Activated CD8-positive, alpha-beta T cell treated with anti-CD3 and anti-CD28 coated beads for 36 hours (primary cell): ENCODE measurements at regions of chr7 and their contacts with region 1.

Region 1: GRCh38 chr7:30740424-30741181 is 11.3 kb upstream of the INMT start:
- DNase-seq: peak; percentile 84
- ATAC-seq: peak; percentile 71
- H3K4me3 Mint-ChIP-seq: no peak overlapping the region
- H3K27ac Mint-ChIP-seq: no peak overlapping the region
- H3K4me1 Mint-ChIP-seq: peaks cover 34% of the 10 kb centered on the region
- H3K27me3 Mint-ChIP-seq: no peaks in the 10 kb centered on the region
- CTCF ChIP-seq: peak; percentile 98

Region 2: GRCh38 chr7:30548762-30549344 is 191.8 kb before region 1 on chr7:
- CTCF ChIA-PET with region 1: interaction called, 25 read pairs
- POLR2A ChIA-PET with region 1: no interaction called
- intact Hi-C with region 1: no loop called
- DNase-seq: peak; percentile 50
- ATAC-seq: peak; percentile 73
- H3K4me3 Mint-ChIP-seq: no peak overlapping the region
- H3K27ac Mint-ChIP-seq: no peak overlapping the region
- H3K4me1 Mint-ChIP-seq: no peaks in the 10 kb centered on the region
- H3K27me3 Mint-ChIP-seq: no peaks in the 10 kb centered on the region
- CTCF ChIP-seq: peak; percentile 85

Region 3: GRCh38 chr7:30642789-30643188 is 97.8 kb before region 1 on chr7:
- CTCF ChIA-PET with region 1: interaction called, 11 read pairs
- POLR2A ChIA-PET with region 1: no interaction called
- intact Hi-C with region 1: loop called (anchors 10 kb)
- DNase-seq: no peak
- ATAC-seq: no peak
- H3K4me3 Mint-ChIP-seq: no peak overlapping the region
- H3K27ac Mint-ChIP-seq: no peak overlapping the region
- H3K4me1 Mint-ChIP-seq: peaks cover 2% of the 10 kb centered on the region
- H3K27me3 Mint-ChIP-seq: no peaks in the 10 kb centered on the region
- CTCF ChIP-seq: no peak

Region 4: DNA sequence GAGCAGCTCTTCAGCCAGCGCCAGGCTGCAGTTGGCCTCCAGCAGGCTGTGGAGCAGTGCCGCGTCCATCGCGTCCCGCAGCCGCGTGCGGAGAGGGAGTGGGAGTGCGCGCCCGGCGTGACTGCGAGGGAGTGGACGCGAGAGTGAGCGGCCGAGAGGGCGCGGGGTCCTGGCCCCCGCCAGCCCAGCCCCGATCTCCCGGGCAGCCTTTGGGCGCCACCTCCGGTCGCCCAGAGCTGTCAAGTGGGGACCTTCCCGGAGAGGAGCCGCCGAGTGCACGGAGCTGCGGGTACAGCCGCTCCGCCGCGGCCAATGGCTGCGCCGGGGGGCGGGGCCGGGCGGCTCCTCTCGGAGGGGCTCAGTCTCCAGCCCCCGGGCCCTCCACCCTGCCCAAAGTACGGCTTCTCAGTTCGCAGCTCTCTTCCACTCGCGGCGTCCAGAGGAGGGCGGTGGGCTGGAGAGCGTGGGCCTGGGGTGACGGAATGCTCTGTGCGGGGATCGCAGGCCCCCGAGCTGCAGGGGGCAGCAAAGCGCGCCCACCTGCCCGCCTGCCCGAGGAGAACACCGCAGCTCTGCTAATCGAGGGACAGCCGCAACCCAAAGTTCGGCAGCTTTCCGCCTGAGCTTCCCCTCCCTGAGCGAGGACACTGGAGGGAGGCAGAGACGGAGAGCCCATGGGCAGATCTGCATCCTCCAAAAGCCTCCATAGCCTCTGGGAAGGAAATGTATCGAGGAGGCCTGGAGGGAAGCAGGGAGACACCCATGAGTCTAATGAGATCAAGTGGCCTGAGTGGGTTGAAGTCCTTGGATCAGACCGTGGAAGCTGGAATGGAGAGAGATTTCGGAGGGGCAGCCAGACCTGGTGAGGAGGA is 58.2 kb before region 1 on chr7 and contains the start of gene CRHR2:
- CTCF ChIA-PET with region 1: interaction called, 105 read pairs
- POLR2A ChIA-PET with region 1: no interaction called
- intact Hi-C with region 1: loop called (anchors 5 kb)
- DNase-seq: peak; percentile 56
- ATAC-seq: peak; percentile 90
- H3K4me3 Mint-ChIP-seq: peak within 1 kb of the TSS; percentile 61
- H3K27ac Mint-ChIP-seq: no peak within 1 kb of the TSS
- H3K4me1 Mint-ChIP-seq: peaks cover 10% of the 10 kb centered on the region
- H3K27me3 Mint-ChIP-seq: peaks cover 44% of the 10 kb centered on the region
- CTCF ChIP-seq: peak; percentile 52
- total RNA-seq, gene CRHR2: not detected

Region 5: DNA sequence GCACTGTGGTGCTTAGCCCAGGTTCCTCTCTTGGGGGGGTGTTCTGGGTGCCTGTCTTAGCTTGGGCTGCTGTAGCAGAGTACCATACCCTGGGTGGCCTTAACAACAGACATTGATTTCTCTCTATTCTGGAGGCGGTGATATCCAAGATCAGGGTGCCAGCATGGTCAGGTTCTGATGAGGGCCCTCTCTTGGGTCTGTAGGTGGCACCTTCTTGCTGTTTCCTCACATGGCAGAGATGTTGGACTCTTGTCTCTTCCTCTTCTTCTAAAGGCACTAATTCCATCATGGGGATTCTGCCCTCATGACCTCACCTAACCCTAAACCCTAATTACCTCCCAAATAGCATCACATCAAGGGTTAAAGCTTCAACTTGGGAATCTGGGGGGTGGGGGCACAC is 38.4 kb before region 1 on chr7:
- CTCF ChIA-PET with region 1: interaction called, 42 read pairs
- POLR2A ChIA-PET with region 1: no interaction called
- intact Hi-C with region 1: no loop called
- DNase-seq: peak; percentile 33
- ATAC-seq: peak; percentile 56
- H3K4me3 Mint-ChIP-seq: no peak overlapping the region
- H3K27ac Mint-ChIP-seq: no peak overlapping the region
- H3K4me1 Mint-ChIP-seq: peaks cover 3% of the 10 kb centered on the region
- H3K27me3 Mint-ChIP-seq: no peaks in the 10 kb centered on the region
- CTCF ChIP-seq: no peak

Region 6: GRCh38 chr7:30727061-30727945 is 13.3 kb before region 1 on chr7:
- CTCF ChIA-PET with region 1: interaction called, 51 read pairs
- POLR2A ChIA-PET with region 1: interaction called, 9 read pairs
- intact Hi-C with region 1: no loop called
- DNase-seq: peak; percentile 74
- ATAC-seq: peak; percentile 91
- H3K4me3 Mint-ChIP-seq: peak overlapping the region; percentile 78
- H3K27ac Mint-ChIP-seq: peak overlapping the region; percentile 93
- H3K4me1 Mint-ChIP-seq: peaks cover 53% of the 10 kb centered on the region
- H3K27me3 Mint-ChIP-seq: no peaks in the 10 kb centered on the region
- CTCF ChIP-seq: no peak

Region 7: GRCh38 chr7:30764030-30764975 is 23.7 kb after region 1 on chr7:
- CTCF ChIA-PET with region 1: interaction called, 11 read pairs
- POLR2A ChIA-PET with region 1: no interaction called
- intact Hi-C with region 1: no loop called
- DNase-seq: no peak
- ATAC-seq: no peak
- H3K4me3 Mint-ChIP-seq: no peak overlapping the region
- H3K27ac Mint-ChIP-seq: no peak overlapping the region
- H3K4me1 Mint-ChIP-seq: no peaks in the 10 kb centered on the region
- H3K27me3 Mint-ChIP-seq: peaks cover 3% of the 10 kb centered on the region
- CTCF ChIP-seq: no peak